ENCODE measurements at regions of chr15 and their contacts with region 1.

Region 1: GRCh38 chr15:64731012-64731806 is 44.2 kb downstream of the RBPMS2 start:
- DNase-seq: peak; percentile 36
- ATAC-seq: peak; percentile 91
- H3K4me3 ChIP-seq: no peak overlapping the region
- H3K27ac ChIP-seq: no peak overlapping the region
- H3K4me1 ChIP-seq: peaks cover 11% of the 10 kb centered on the region
- H3K27me3 ChIP-seq: no peaks in the 10 kb centered on the region; a peak in 1 of 4 replicates
- CTCF ChIP-seq: peak; percentile 85 to 96 (median 86)
- EP300 ChIP-seq: no peak
- POLR2A ChIP-seq: no peak
- RAD21 ChIP-seq: peak; percentile 98

Region 2: GRCh38 chr15:64209680-64210334 is 521.4 kb before region 1 on chr15:
- CTCF ChIA-PET with region 1: interaction called, 16 read pairs
- POLR2A ChIA-PET with region 1: interaction called, 4 read pairs
- RAD21 ChIA-PET with region 1: interaction called, 8 read pairs
- SMC1A ChIA-PET with region 1: interaction called, 17 read pairs
- in situ Hi-C with region 1: no loop called
- intact Hi-C with region 1: loop called (anchors 5 kb)
- DNase-seq: peak; percentile 9
- ATAC-seq: peak; percentile 72
- H3K4me3 ChIP-seq: no peak overlapping the region
- H3K27ac ChIP-seq: no peak overlapping the region
- H3K4me1 ChIP-seq: no peaks in the 10 kb centered on the region
- H3K27me3 ChIP-seq: no peaks in the 10 kb centered on the region
- CTCF ChIP-seq: peak; percentile 29 to 54 (median 32); a peak in 4 of 6 replicates
- EP300 ChIP-seq: no peak
- POLR2A ChIP-seq: no peak
- RAD21 ChIP-seq: peak; percentile 78

Region 3: GRCh38 chr15:64430000-64430735 is 301.0 kb before region 1 on chr15:
- CTCF ChIA-PET with region 1: interaction called, 64 read pairs
- POLR2A ChIA-PET with region 1: no interaction called
- RAD21 ChIA-PET with region 1: interaction called, 22 read pairs
- SMC1A ChIA-PET with region 1: interaction called, 33 read pairs
- in situ Hi-C with region 1: no loop called
- intact Hi-C with region 1: loop called (anchors 2 kb)
- DNase-seq: peak; percentile 65
- ATAC-seq: peak; percentile 87
- H3K4me3 ChIP-seq: 0 out of 2 replicates have a peak overlapping the region, but pooled peaks have one; percentile 6
- H3K27ac ChIP-seq: peak overlapping the region; percentile 87
- H3K4me1 ChIP-seq: peaks cover 19% of the 10 kb centered on the region
- H3K27me3 ChIP-seq: no peaks in the 10 kb centered on the region
- CTCF ChIP-seq: no peak
- EP300 ChIP-seq: peak in 1 of 2 experiments; percentile 55; a peak in 2 of 4 replicates
- POLR2A ChIP-seq: no peak
- RAD21 ChIP-seq: no peak

Region 4: GRCh38 chr15:64693134-64693533 is 38.1 kb before region 1 on chr15:
- CTCF ChIA-PET with region 1: interaction called, 267 read pairs
- POLR2A ChIA-PET with region 1: interaction called, 8 read pairs
- RAD21 ChIA-PET with region 1: interaction called, 94 read pairs
- SMC1A ChIA-PET with region 1: interaction called, 96 read pairs
- in situ Hi-C with region 1: no loop called
- intact Hi-C with region 1: no loop called
- DNase-seq: no peak
- ATAC-seq: no peak
- H3K4me3 ChIP-seq: no peak overlapping the region
- H3K27ac ChIP-seq: no peak overlapping the region
- H3K4me1 ChIP-seq: peaks cover 22% of the 10 kb centered on the region
- H3K27me3 ChIP-seq: no peaks in the 10 kb centered on the region
- CTCF ChIP-seq: no peak
- EP300 ChIP-seq: no peak
- POLR2A ChIP-seq: no peak
- RAD21 ChIP-seq: no peak

Region 5: GRCh38 chr15:64836023-64836536 is 104.9 kb after region 1 on chr15:
- CTCF ChIA-PET with region 1: interaction called, 12 read pairs
- POLR2A ChIA-PET with region 1: interaction called, 5 read pairs
- RAD21 ChIA-PET with region 1: interaction called, 4 read pairs
- SMC1A ChIA-PET with region 1: interaction called, 8 read pairs
- in situ Hi-C with region 1: no loop called
- intact Hi-C with region 1: no loop called
- DNase-seq: no peak
- ATAC-seq: peak; percentile 9
- H3K4me3 ChIP-seq: no peak overlapping the region
- H3K27ac ChIP-seq: no peak overlapping the region
- H3K4me1 ChIP-seq: 0 out of 2 replicates have a peak, but pooled peaks cover 10% of the 10 kb centered on the region
- H3K27me3 ChIP-seq: no peaks in the 10 kb centered on the region
- CTCF ChIP-seq: no peak
- EP300 ChIP-seq: no peak
- POLR2A ChIP-seq: no peak
- RAD21 ChIP-seq: no peak

Region 6: DNA sequence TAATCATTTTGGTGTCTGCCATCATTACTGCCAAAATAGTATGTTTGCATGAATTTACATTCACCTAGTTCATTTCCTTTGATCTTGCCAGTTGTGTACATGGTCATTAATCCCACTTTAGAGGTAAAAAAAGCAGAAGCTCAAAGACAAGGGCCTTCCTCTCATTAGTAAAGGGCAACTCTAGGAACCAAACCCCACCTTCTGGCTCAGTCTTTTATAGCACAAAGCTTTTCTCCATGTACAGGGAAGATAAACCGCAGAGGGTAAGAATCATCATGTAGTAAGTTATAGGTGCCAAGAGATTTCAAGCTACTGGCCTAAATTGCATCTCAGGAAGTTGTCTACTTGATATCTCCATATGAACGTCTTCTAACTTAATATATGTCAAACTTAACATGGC is 277.8 kb after region 1 on chr15:
- CTCF ChIA-PET with region 1: interaction called, 7 read pairs
- POLR2A ChIA-PET with region 1: no interaction called
- RAD21 ChIA-PET with region 1: interaction called, 10 read pairs
- SMC1A ChIA-PET with region 1: interaction called, 5 read pairs
- in situ Hi-C with region 1: no loop called
- intact Hi-C with region 1: no loop called
- DNase-seq: no peak
- ATAC-seq: peak; percentile 56; the same call in 2 of the 3 replicates
- H3K4me3 ChIP-seq: no peak overlapping the region
- H3K27ac ChIP-seq: no peak overlapping the region
- H3K4me1 ChIP-seq: no peaks in the 10 kb centered on the region
- H3K27me3 ChIP-seq: no peaks in the 10 kb centered on the region
- CTCF ChIP-seq: peak in 2 of 3 experiments; percentile 23 to 46; a peak in 3 of 6 replicates
- EP300 ChIP-seq: no peak
- POLR2A ChIP-seq: no peak
- RAD21 ChIP-seq: peak; percentile 50

Region 7: DNA sequence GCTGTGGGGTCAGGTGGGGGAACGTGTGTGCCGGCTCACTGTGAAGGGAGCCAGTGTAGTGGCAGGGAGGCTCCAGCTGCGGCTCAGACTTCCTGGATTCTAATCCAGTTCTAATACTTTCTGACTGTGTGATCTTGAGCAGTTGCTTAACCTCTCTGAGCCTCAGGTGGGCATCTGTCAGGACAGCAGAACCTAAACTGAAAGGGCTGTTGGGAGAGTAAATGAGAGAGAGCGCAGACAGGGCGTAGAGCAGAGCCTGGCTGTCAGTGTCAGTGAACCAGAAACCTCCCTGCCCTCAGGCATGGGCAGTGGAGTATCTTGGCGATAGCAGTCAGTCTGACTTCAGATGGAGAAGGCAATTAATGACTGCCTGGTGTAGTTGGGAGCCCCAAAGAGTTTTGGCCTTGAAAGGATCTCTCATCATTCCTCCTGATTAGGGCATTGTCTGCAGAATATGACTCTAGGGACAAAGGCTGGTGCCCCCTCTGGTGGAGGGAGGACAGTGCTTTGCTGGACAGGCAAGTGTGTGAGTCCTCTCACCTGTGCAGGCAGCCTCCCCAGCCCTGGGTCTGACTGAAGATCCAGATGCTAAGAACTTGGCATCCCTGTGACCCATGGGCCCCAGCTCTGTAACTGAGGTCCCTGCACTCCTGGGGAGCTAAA is 354.9 kb after region 1 on chr15:
- CTCF ChIA-PET with region 1: interaction called, 3 read pairs
- POLR2A ChIA-PET with region 1: no interaction called
- RAD21 ChIA-PET with region 1: interaction called, 4 read pairs
- SMC1A ChIA-PET with region 1: no interaction called
- in situ Hi-C with region 1: no loop called
- intact Hi-C with region 1: loop called (anchors 10 kb)
- DNase-seq: no peak
- ATAC-seq: peak; percentile 83
- H3K4me3 ChIP-seq: no peak overlapping the region
- H3K27ac ChIP-seq: no peak overlapping the region
- H3K4me1 ChIP-seq: no peaks in the 10 kb centered on the region
- H3K27me3 ChIP-seq: peaks cover 0 to 6% of the 10 kb centered on the region in 2 experiments; a peak in 1 of 4 replicates
- CTCF ChIP-seq: peak; percentile 40 to 51 (median 45)
- EP300 ChIP-seq: no peak
- POLR2A ChIP-seq: no peak
- RAD21 ChIP-seq: peak; percentile 55